AG04449 (cell line): ENCODE measurements at regions of chr19 and their contacts with region 1.

Region 1: DNA sequence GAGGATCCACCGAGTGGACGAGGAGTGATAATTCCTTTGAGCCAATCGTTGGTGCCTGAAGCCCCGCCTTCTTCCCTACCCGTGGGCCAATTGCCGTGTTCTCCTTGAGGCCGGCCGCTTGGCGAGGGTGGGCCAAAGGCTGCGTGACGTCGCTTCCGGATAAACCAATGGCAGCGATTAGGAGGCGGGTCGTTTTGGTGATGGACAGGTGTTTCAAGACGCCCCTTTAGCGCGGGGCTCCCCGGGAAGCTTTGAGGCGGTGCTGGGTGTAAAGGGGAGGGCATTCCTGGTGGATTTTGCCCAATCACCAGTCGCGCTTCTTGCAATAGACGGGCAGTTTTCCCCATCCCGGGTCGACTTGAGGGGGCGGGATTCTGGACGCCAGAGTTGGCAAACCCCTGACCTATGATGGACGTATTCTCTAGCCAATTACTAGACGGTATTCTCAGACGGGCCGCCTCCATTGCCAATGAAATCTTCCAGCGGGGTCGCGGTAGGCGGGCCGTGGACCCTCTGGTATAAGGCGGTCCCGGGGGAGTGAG is 310 bp upstream of the PRMT1 start:
- DNase-seq: peak; percentile 99
- H3K4me3 ChIP-seq: peak overlapping the region; percentile 99
- CTCF ChIP-seq: no peak

Region 2: DNA sequence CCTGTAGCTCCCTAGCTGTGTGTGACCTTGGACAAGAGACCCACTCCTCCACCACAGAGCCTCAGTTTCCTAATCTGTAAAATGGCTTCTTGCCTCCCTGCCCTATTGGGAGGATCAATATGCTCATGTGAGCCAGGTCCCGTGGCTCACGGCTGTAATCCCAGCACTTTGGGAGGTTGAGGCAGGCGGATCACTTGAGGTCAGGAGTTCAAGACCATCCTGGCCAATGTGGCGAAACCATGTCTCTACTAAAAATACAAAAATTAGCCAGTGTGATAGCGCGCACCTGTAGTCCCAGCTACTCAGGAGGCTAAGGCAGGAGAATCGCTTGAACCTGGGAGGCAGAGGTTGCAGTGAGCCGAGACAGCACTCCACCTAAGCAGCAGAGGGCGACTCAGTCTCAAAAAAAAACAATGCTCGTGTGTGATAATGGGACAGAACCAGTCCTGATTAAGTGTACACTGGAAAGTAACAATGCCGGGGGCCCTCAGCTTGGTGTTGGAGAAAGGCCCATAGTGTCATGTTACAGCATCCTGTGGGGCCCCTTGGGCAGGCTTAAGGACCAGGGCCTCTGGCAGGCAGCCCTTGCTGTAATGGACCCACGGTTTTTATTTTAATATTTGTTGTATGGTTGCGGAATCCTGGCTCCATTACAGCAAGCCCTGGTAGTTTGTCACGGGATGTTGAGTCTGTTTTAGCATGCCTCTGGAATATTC is 173.7 kb before region 1 on chr19:
- CTCF ChIA-PET with region 1: interaction called, 28 read pairs
- POLR2A ChIA-PET with region 1: no interaction called
- DNase-seq: no peak
- H3K4me3 ChIP-seq: no peak overlapping the region
- CTCF ChIP-seq: peak; percentile 57

Region 3: GRCh38 chr19:49580264-49581006 is 96.3 kb before region 1 on chr19 and contains the start of gene NOSIP:
- CTCF ChIA-PET with region 1: interaction called, 13 read pairs
- POLR2A ChIA-PET with region 1: interaction called, 8 read pairs
- DNase-seq: peak; percentile 84
- H3K4me3 ChIP-seq: peak within 1 kb of the TSS; percentile 84
- CTCF ChIP-seq: no peak

Region 4: GRCh38 chr19:49655570-49656455 is 20.9 kb before region 1 on chr19:
- CTCF ChIA-PET with region 1: interaction called, 48 read pairs
- POLR2A ChIA-PET with region 1: interaction called, 3 read pairs
- DNase-seq: no peak
- H3K4me3 ChIP-seq: no peak overlapping the region
- CTCF ChIP-seq: no peak

Region 5: DNA sequence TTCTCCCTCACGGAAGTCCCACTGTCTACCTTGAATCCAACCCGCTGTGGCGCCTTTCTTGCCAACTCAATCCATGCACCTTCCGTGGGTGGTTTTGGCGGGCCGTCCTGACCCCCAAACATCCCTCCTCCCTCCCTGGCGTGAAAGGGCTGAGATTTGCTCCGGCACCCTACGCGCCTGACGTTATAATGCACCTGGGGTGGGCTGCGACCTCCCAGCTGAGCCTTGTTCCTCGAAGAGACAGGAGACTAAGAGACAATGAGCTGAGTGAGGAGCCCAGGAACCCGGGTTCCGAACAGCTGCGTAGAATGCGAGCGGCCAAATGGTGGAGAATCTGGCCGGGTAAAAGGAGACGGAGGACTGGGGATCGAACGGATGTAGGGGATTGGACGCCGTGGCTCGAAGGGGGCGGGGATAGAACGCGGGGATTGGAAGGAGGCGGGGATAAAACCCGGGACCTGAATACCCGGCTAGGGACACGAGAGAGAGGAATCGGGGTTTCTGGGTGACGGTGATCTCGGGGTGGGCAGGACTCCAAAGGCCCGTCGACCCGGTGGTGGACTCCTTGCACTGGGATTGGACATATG is 14.0 kb after region 1 on chr19 and contains the start of gene CPT1C:
- CTCF ChIA-PET with region 1: interaction called, 39 read pairs
- POLR2A ChIA-PET with region 1: no interaction called
- DNase-seq: no peak
- H3K4me3 ChIP-seq: peak within 1 kb of the TSS; percentile 64
- CTCF ChIP-seq: no peak